ENCODE measurements at regions of chr13 and their contacts with region 1.

Region 1: GRCh38 chr13:25886438-25887214 is 165.2 kb downstream of the SHISA2 start:
- DNase-seq: no peak
- H3K4me3 Mint-ChIP-seq: no peak overlapping the region
- H3K27ac Mint-ChIP-seq: no peak overlapping the region
- H3K4me1 Mint-ChIP-seq: peaks cover 37% of the 10 kb centered on the region
- H3K27me3 Mint-ChIP-seq: no peaks in the 10 kb centered on the region

Region 2: GRCh38 chr13:25347151-25347550 is 539.5 kb before region 1 on chr13:
- intact Hi-C with region 1: no loop called
- DNase-seq: no peak
- H3K4me3 Mint-ChIP-seq: no peak overlapping the region
- H3K27ac Mint-ChIP-seq: no peak overlapping the region
- H3K4me1 Mint-ChIP-seq: no peaks in the 10 kb centered on the region
- H3K27me3 Mint-ChIP-seq: peaks cover 1% of the 10 kb centered on the region

Region 3: GRCh38 chr13:25762795-25763377 is 123.7 kb before region 1 on chr13:
- intact Hi-C with region 1: loop called (anchors 5 kb)
- DNase-seq: no peak
- H3K4me3 Mint-ChIP-seq: no peak overlapping the region
- H3K27ac Mint-ChIP-seq: no peak overlapping the region
- H3K4me1 Mint-ChIP-seq: peaks cover 16% of the 10 kb centered on the region
- H3K27me3 Mint-ChIP-seq: peaks cover 3% of the 10 kb centered on the region

Region 4: DNA sequence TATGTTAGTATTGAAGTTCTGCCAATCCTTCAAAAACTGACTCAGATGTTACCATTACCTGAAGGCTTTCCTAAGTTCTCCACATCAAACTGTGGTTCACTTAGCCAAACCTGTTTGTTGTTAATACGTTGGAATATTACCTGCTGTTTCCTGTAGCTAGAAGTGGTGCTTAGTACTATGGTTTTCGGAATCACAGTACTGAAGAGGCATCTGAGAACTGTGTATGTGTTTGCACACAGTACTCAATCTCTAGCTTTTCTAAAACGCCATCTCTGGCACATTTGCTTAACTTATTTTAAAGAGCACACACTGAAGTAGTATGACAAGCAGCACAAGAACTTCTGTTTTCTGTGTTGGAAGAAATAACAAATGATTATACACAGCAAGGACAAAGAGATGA is 83.0 kb before region 1 on chr13:
- intact Hi-C with region 1: no loop called
- DNase-seq: no peak
- H3K4me3 Mint-ChIP-seq: no peak overlapping the region
- H3K27ac Mint-ChIP-seq: no peak overlapping the region
- H3K4me1 Mint-ChIP-seq: peaks cover 12% of the 10 kb centered on the region
- H3K27me3 Mint-ChIP-seq: no peaks in the 10 kb centered on the region

Region 5: DNA sequence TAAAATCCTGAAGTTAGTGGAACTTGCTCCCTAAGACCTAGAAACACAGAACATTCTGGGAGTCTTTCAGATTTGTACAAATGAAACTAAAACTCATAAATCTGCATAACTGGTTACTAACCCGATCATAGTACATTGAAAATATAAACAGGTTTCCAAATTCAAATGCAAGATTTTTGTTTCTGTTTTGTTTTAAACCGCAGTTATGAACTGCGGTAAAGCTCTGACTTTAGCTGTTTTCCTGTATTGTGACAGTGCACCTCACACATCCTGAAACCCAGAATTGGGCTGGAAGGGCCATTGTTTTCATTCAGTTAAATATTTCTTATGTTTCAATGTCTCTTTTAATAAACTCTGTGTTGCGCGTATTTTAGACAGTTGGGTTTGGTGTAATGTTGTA is 39.5 kb before region 1 on chr13:
- intact Hi-C with region 1: loop called (anchors 5 kb)
- DNase-seq: no peak
- H3K4me3 Mint-ChIP-seq: no peak overlapping the region
- H3K27ac Mint-ChIP-seq: no peak overlapping the region
- H3K4me1 Mint-ChIP-seq: peaks cover 32% of the 10 kb centered on the region
- H3K27me3 Mint-ChIP-seq: peaks cover 6% of the 10 kb centered on the region

Region 6: GRCh38 chr13:25874907-25875306 is 11.7 kb before region 1 on chr13:
- intact Hi-C with region 1: loop called (anchors 1 kb)
- DNase-seq: peak; percentile 56
- H3K4me3 Mint-ChIP-seq: peak overlapping the region; percentile 6
- H3K27ac Mint-ChIP-seq: peak overlapping the region; percentile 79
- H3K4me1 Mint-ChIP-seq: peaks cover 55% of the 10 kb centered on the region
- H3K27me3 Mint-ChIP-seq: peaks cover 2% of the 10 kb centered on the region

Region 7: GRCh38 chr13:26051657-26052311 is 165.2 kb after region 1 on chr13 and contains the start of gene SHISA2:
- intact Hi-C with region 1: loop called (anchors 5 kb)
- DNase-seq: no peak
- H3K4me3 Mint-ChIP-seq: peak within 1 kb of the TSS; percentile 52
- H3K27ac Mint-ChIP-seq: no peak within 1 kb of the TSS
- H3K4me1 Mint-ChIP-seq: peaks cover 19% of the 10 kb centered on the region
- H3K27me3 Mint-ChIP-seq: peaks cover 69% of the 10 kb centered on the region
- total RNA-seq, gene SHISA2: 0.07 and 0.14 TPM in 2 replicates

Region 8: GRCh38 chr13:26518451-26518959 is 631.9 kb after region 1 on chr13:
- intact Hi-C with region 1: no loop called
- DNase-seq: no peak
- H3K4me3 Mint-ChIP-seq: no peak overlapping the region
- H3K27ac Mint-ChIP-seq: no peak overlapping the region
- H3K4me1 Mint-ChIP-seq: no peaks in the 10 kb centered on the region
- H3K27me3 Mint-ChIP-seq: peaks cover 3% of the 10 kb centered on the region